ENCODE measurements at regions of chr2 and their contacts with region 1.

Region 1: GRCh38 chr2:48107326-48107925 is 201.1 kb upstream of the FBXO11 start:
- DNase-seq: peak; percentile 20
- H3K4me3 ChIP-seq: no peak overlapping the region
- CTCF ChIP-seq: peak; percentile 7

Region 2: DNA sequence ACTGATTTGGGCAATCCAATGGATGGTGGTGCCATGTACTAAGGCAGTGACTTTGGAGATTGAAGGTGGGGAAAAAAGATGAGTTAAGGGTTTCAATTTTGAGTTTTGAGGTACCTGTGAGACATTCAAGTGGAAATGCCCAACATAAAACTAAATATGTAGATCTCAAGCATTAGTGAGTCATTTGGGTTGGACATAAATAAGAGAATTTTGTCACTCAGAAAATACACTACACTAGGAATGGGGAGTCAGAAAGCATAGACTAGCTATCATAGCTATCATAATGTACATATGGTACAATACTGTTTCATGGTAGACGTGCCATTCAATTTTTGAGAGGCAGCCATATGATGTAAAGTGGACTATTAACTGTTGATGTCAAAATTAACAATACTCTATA is 257.2 kb before region 1 on chr2:
- in situ Hi-C with region 1: loop called (anchors 10 kb)
- DNase-seq: no peak
- H3K4me3 ChIP-seq: no peak overlapping the region
- CTCF ChIP-seq: no peak

Region 3: GRCh38 chr2:48048476-48049171 is 58.8 kb before region 1 on chr2:
- in situ Hi-C with region 1: no loop called
- DNase-seq: no peak
- H3K4me3 ChIP-seq: no peak overlapping the region
- CTCF ChIP-seq: no peak

Region 4: GRCh38 chr2:48069769-48070168 is 37.7 kb before region 1 on chr2:
- in situ Hi-C with region 1: no loop called
- DNase-seq: no peak
- H3K4me3 ChIP-seq: no peak overlapping the region
- CTCF ChIP-seq: no peak

Region 5: DNA sequence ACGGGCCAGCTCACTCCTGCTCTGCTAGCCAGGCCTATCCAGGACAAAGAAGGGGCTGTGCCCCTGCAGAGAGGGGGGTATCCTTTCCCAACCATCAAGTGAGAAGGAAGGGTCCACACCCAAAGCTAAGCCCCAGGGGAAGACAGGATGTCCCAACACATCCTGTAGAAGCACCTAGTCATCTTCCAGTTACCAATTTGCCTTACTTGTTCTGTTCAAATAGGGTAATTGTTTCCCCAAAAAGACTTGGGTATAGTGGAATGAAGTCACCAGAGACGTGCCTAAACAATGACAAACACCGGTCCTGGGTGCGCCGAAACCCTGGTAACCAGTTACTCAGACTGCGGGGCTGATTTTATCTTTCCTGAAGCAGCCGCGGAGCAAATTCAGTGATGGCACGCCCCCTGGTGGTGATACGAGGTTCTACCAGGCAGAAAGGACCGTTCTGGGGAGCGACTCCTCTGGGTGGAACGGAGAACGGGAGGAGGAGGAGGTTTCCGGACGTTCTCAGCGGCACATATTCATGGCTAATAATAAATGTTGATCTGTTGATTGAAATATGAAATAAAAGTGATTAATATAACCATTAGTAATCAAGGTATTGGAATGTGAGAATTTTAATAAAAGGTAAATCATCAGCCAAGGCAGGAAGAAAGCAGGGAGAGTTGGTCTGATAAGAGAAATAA is 313.2 kb after region 1 on chr2:
- in situ Hi-C with region 1: loop called (anchors 5 kb)
- DNase-seq: peak; percentile 60
- H3K4me3 ChIP-seq: no peak overlapping the region
- CTCF ChIP-seq: peak; percentile 95